Spleen (tissue), 13 donors: ENCODE measurements at regions of chr10 and their contacts with region 1.

Region 1: DNA sequence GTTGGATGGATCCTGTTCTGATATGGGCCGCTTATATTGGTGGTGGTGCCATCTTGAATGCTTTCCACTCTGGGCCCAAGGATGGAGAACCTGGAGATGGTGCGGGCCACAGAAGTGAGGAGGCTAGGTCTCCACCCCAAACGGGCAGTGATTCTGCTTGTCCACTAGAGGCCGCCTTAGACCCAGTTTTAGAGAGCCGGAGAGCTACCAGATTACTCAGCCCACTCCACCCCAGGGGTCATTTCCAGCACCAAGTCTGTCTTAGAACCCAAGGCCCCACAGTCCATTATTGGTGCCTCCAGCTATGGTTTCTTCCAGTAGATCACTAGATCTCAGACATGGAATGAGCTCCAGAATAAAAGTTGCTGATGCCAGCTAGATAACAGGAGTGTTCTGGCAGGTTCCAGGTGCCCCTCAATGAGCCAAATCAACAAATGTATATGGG is 11.8 kb upstream of the CAMK2G start:
- DNase-seq: peak; percentile 85
- H3K4me3 ChIP-seq: no peak overlapping the region
- H3K27ac ChIP-seq: peak overlapping the region in 4 of 8 donors; percentile 52 to 68 (median 65)
- H3K4me1 ChIP-seq: peaks cover 3 to 35% (median 13%) of the 10 kb centered on the region in 6 donors
- H3K27me3 ChIP-seq: no peaks in the 10 kb centered on the region
- CTCF ChIP-seq: peak; percentile 79 to 94 (median 88)
- POLR2A ChIP-seq: no peak

Region 2: DNA sequence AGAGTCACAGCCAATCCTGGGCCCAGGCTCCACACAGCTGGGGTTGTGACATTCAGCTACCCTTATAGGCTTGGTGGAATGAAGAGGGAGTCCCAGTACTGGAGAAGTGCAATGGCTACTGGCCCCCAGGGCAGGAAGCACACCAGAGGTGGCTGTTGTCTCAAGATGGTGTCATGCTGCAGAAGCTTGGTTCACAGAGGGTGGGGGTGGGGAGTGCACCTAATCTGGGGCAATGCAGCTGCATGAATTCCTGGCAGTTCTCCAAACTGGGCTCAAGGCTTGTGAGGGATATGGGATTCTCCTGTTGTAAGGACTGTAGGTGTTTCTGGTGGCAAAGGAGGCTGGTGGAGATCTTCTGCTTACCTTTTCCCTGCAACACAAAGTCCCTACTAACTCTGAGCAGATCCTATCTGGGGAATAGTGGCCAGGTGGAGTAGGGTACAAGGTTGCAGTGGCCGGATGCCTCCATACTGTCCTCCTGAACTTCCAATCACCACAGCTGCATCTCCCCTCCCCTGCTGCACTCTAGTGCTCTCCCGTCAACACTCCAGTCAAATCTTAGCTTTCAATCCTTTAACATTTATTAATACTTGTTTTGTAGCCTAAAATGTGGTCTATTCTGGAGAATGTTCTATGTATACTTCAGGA is 904.1 kb before region 1 on chr10:
- intact Hi-C with region 1: no loop called
- DNase-seq: no peak
- H3K4me3 ChIP-seq: no peak overlapping the region
- H3K27ac ChIP-seq: no peak overlapping the region
- H3K4me1 ChIP-seq: no peaks in the 10 kb centered on the region
- H3K27me3 ChIP-seq: peaks cover 0 to 17% (median 0%) of the 10 kb centered on the region in 7 donors
- CTCF ChIP-seq: no peak
- POLR2A ChIP-seq: no peak

Region 3: DNA sequence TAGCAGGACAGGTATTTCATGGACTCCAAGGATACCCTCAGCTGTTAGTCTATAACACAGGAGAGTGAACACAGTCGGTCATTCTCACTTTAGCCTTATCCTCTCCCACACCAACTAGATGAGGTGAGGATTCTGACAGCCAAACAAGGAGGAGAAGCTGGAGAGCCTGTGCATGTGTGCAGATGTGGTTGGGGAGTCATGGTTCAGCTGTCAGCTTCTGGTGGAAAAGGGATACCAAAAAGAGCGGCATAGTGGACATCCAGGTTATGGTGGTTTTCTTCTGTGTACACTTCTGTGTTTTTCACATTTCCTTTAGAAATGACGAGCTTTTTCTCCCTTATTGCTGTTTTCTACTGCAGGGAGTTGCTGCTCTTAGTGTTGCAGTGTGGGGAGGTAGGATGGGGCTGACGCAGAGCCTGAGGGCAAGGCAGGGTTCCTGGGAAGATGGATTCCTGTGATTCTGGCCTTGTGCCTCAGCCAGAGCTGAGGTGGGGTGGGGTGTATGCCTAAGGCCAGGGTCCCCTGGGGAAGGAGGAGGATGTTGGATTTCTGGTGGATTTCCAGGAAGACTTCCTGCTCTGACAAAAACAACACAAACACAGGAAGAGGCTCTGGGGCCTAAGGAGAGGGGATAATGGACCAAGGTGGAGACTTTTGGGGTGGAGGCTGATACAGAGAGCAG is 51.4 kb after region 1 on chr10:
- intact Hi-C with region 1: loop called (anchors 5 kb)
- DNase-seq: no peak
- H3K4me3 ChIP-seq: no peak overlapping the region
- H3K27ac ChIP-seq: peak overlapping the region in 3 of 8 donors; percentile 0 to 13 (median 3)
- H3K4me1 ChIP-seq: peaks cover 5 to 32% (median 11%) of the 10 kb centered on the region in 6 donors
- H3K27me3 ChIP-seq: no peaks in the 10 kb centered on the region
- CTCF ChIP-seq: no peak
- POLR2A ChIP-seq: no peak

Region 4: GRCh38 chr10:73997787-73998622 is 111.9 kb after region 1 on chr10 and contains the start of gene VCL:
- intact Hi-C with region 1: no loop called
- DNase-seq: peak; percentile 99
- H3K4me3 ChIP-seq: peak within 1 kb of the TSS; percentile 70 to 96 (median 91)
- H3K27ac ChIP-seq: peak within 1 kb of the TSS; percentile 86 to 97 (median 94)
- H3K4me1 ChIP-seq: peaks cover 11 to 78% (median 45%) of the 10 kb centered on the region in 6 donors
- H3K27me3 ChIP-seq: no peaks in the 10 kb centered on the region
- CTCF ChIP-seq: peak in 5 of 11 experiments; percentile 10 to 53 (median 15)
- POLR2A ChIP-seq: peak; percentile 83 to 98 (median 89)
- total RNA-seq, gene VCL: 42.9 to 214 (median 88.0) TPM

Region 5: GRCh38 chr10:74081192-74081803 is 195.2 kb after region 1 on chr10:
- intact Hi-C with region 1: loop called (anchors 5 kb)
- DNase-seq: no peak
- H3K4me3 ChIP-seq: no peak overlapping the region
- H3K27ac ChIP-seq: no peak overlapping the region
- H3K4me1 ChIP-seq: peaks cover 14 to 66% (median 33%) of the 10 kb centered on the region in 6 donors
- H3K27me3 ChIP-seq: no peaks in the 10 kb centered on the region
- CTCF ChIP-seq: peak; percentile 16 to 75 (median 66)
- POLR2A ChIP-seq: no peak

Region 6: DNA sequence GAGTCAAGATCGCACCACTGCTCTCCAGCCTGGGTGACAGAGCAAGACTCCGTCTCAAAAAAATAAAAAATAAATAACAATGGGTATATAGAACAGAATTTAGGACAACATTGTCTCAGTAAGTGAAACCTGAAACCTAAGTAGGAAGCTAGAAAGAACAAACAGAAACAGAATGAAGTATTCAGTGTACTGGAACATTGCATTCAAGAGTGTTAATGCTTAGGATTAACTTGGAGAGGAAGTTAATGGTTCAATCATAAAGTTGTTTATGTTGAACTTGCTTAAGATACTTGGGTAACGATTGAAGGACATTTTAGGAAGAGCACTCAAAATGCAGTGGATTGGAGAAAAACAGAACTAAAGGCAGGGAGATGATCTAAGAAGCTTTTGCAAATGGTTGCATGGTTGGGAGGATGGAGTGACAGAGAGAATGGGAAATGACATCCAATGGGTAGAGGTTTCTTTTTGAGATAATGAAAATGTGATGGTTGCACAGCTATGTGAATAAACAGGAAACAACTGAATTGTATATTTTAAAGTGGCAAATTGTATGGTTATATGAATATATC is 498.6 kb after region 1 on chr10:
- intact Hi-C with region 1: no loop called
- DNase-seq: no peak
- H3K4me3 ChIP-seq: no peak overlapping the region
- H3K27ac ChIP-seq: peak overlapping the region in 5 of 8 donors; percentile 34 to 76 (median 47)
- H3K4me1 ChIP-seq: peaks cover 0 to 33% (median 0%) of the 10 kb centered on the region in 6 donors
- H3K27me3 ChIP-seq: no peaks in the 10 kb centered on the region
- CTCF ChIP-seq: no peak
- POLR2A ChIP-seq: no peak